PC-3 (cell line): ENCODE measurements at regions of chr20 and their contacts with region 1.

Region 1: GRCh38 chr20:34797012-34797995 is 28.1 kb downstream of the NCOA6 start:
- DNase-seq: no peak
- ATAC-seq: no peak
- H3K4me3 ChIP-seq: no peak overlapping the region
- H3K27ac ChIP-seq: no peak overlapping the region
- H3K4me1 ChIP-seq: peaks cover 2% of the 10 kb centered on the region
- H3K27me3 ChIP-seq: no peaks in the 10 kb centered on the region
- CTCF ChIP-seq: no peak

Region 2: GRCh38 chr20:34595377-34596184 is 201.7 kb before region 1 on chr20:
- CTCF ChIA-PET with region 1: no interaction called
- POLR2A ChIA-PET with region 1: no interaction called
- intact Hi-C with region 1: no loop called
- DNase-seq: no peak
- ATAC-seq: no peak
- H3K4me3 ChIP-seq: no peak overlapping the region
- H3K27ac ChIP-seq: no peak overlapping the region
- H3K4me1 ChIP-seq: no peaks in the 10 kb centered on the region
- H3K27me3 ChIP-seq: no peaks in the 10 kb centered on the region
- CTCF ChIP-seq: no peak

Region 3: DNA sequence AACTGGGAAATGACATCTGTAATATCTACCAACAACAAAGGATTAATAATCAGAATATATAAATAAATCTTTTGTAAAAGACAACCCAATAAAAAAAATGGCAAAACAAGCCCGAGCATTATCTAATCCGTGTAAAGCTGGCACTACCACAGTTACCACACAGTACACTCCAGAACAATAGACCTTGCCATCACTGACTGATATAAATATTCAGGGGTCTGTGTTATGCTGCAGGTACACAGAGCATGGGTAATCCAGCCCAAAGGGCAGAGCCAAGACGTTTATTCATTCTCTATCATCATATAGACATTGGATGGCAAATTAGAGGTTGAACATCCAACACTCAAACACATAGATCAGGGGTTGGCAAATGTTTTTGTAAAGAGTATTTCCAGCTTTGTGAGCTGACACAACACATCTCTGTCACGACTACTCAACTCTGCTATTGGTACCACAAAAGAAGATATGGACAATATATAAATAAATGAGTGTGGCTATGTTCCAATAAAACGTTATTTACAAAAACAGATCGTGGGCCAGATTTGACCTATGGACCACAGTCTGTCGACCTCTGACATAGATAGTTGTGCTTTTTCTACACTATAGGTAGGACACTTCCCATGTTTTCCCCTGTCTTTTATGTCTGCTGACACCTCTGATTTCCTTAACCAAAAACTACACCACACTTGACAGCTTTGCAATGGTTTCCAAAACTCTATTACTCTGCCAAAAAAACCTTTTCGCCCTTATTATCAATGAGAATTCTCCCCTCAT is 23.7 kb after region 1 on chr20:
- CTCF ChIA-PET with region 1: no interaction called
- POLR2A ChIA-PET with region 1: interaction called, 17 read pairs
- intact Hi-C with region 1: no loop called
- DNase-seq: no peak
- ATAC-seq: no peak
- H3K4me3 ChIP-seq: no peak overlapping the region
- H3K27ac ChIP-seq: no peak overlapping the region
- H3K4me1 ChIP-seq: peaks cover 13% of the 10 kb centered on the region
- H3K27me3 ChIP-seq: no peaks in the 10 kb centered on the region
- CTCF ChIP-seq: no peak